ENCODE measurements at regions of chr16 and their contacts with region 1.

Region 1: DNA sequence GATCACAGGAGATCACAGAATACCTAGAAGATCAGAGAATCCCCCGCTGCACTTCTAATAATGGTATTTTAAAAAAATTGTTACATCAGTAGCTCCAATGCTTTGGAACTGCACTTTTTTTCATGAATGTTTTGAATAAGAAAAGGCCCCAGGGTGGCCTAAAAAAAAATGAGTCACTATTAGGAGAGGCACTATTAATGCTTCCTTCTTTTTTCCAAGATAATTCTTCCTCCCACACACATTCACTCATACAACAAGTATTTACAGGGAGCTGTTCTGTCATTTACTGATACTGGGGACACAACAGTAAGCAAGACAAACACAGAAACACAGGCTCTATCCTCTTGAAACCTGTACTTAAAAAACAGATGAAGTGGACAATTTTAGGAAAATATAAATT is 675 bp upstream of the PDZD9 start:
- DNase-seq: no peak
- H3K4me3 Mint-ChIP-seq: no peak overlapping the region
- H3K27ac Mint-ChIP-seq: no peak overlapping the region
- H3K4me1 Mint-ChIP-seq: peaks cover 10% of the 10 kb centered on the region
- H3K27me3 Mint-ChIP-seq: no peaks in the 10 kb centered on the region

Region 2: DNA sequence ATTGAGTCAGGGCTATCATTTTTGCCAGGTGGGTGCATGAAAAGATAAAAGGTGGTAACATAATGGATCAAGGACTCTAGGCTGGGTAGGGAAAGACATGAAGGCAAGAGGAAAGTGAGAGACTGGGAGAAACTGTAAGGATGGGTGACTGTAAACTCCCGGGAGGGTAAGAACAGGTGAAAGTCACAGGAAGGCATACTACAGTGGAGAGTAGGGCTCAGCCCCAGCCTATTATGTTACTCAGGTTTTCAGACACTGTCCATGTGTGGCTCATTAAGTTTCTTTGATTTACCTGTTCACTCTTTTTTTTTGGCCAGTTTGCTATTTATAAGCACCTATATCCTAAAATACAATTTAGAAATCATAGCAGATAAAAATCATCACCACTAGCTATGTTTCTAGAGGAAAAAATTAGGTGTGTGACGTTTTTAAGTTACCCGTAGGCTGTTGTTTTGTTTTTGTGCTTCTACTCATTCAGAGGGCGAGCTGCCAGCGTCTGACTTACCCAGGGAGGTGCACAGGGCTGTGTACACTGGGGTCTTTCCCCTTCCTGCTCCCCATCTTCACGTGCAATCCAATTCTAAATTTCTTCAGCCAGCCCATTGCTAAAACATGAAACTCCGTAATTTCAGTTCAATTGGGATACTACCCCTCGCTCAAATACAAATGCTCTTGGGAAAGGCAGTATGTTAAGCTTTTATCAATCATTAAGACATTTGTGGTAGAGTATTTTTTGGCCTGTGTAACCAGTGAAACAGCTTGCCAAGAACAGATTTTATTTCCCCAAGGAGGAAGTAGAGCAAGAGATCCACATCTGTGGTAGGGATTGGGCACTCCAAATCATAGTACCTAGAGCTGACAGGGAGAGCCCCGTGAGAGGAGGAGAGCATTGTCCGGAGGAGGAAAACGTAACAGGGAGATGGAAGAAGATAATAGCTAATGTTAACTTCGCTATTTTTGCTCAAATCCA is 69.1 kb after region 1 on chr16:
- CTCF ChIA-PET with region 1: interaction called, 529 read pairs
- POLR2A ChIA-PET with region 1: no interaction called
- intact Hi-C with region 1: no loop called
- DNase-seq: no peak
- H3K4me3 Mint-ChIP-seq: no peak overlapping the region
- H3K27ac Mint-ChIP-seq: no peak overlapping the region
- H3K4me1 Mint-ChIP-seq: no peaks in the 10 kb centered on the region
- H3K27me3 Mint-ChIP-seq: no peaks in the 10 kb centered on the region

Region 3: GRCh38 chr16:22948603-22949368 is 947.2 kb after region 1 on chr16:
- CTCF ChIA-PET with region 1: no interaction called
- POLR2A ChIA-PET with region 1: no interaction called
- intact Hi-C with region 1: no loop called
- DNase-seq: peak; percentile 79
- H3K4me3 Mint-ChIP-seq: no peak overlapping the region
- H3K27ac Mint-ChIP-seq: no peak overlapping the region
- H3K4me1 Mint-ChIP-seq: peaks cover 7% of the 10 kb centered on the region
- H3K27me3 Mint-ChIP-seq: peaks cover 43% of the 10 kb centered on the region

Measured in activated CD4-positive, alpha-beta memory T cell treated with anti-CD3 and anti-CD28 coated beads for 36 hours (primary cell).